Aorta (tissue), 5 donors: ENCODE measurements at regions of chr14 and their contacts with region 1.

Region 1: DNA sequence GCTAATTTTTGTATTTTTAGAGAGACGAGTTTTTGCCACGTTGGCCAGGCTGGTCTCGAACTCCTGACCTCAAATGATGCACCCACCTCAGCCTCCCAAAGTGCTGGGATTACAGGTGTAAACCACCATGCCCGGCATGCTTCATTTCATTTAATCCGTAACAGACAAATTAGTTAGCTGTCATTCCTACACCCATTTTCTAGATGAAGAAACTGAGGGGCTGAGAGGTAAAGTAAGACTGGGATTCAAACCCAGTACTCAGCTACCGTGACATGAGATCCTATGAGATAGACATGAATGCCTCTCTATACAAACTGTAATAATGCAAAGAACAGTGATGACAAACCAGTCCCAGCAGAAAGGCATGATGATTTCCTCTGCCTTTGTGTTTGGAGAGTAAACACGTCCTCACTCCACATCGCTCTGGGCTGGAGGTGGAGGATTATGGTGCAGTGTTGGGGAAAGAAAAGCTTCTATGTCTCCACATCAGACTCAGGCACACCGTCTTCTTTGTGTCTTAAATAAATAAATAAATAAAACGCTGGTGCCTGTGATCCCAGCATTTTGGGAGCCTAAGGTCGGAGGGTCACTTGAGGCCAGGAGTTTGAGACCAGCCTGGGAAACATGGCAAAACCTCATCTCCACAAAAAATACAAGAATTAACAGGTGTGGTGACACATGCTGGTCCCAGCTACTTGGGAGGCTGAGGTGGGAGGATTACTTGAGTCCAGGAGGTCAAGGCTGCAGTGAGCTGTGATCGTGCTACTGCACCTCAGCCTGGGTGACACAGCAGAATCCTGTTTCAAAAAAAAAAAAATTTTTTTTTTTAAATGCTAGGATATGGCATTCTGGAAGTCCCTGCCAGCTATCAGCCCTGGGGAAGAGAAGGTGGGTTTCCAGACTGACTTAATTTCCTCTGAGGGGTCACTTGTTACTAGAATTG is 10.5 kb downstream of the VSX2 start:
- DNase-seq: no peak
- ATAC-seq: no peak
- H3K4me3 ChIP-seq: no peak overlapping the region
- H3K27ac ChIP-seq: no peak overlapping the region
- H3K4me1 ChIP-seq: no peaks in the 10 kb centered on the region
- H3K27me3 ChIP-seq: no peaks in the 10 kb centered on the region

Region 2: GRCh38 chr14:74217672-74218448 is 31.8 kb before region 1 on chr14:
- intact Hi-C with region 1: loop called in 1 of 2 experiments (anchors 5 kb)
- DNase-seq: peak; percentile 73 to 93
- ATAC-seq: peak; percentile 85
- H3K4me3 ChIP-seq: no peak overlapping the region
- H3K27ac ChIP-seq: no peak overlapping the region
- H3K4me1 ChIP-seq: no peaks in the 10 kb centered on the region
- H3K27me3 ChIP-seq: no peaks in the 10 kb centered on the region